HepG2 (cell line): ENCODE measurements at regions of chr14 and their contacts with region 1.

Region 1: GRCh38 chr14:92951912-92952471 is 29.0 kb downstream of the CHGA start:
- DNase-seq: peak; percentile 37
- ATAC-seq: peak; percentile 92
- H3K4me3 ChIP-seq: no peak overlapping the region
- H3K27ac ChIP-seq: no peak overlapping the region
- H3K4me1 ChIP-seq: no peaks in the 10 kb centered on the region
- H3K27me3 ChIP-seq: no peaks in the 10 kb centered on the region; a peak in 1 of 5 replicates
- CTCF ChIP-seq: peak; percentile 97
- EP300 ChIP-seq: no peak
- POLR2A ChIP-seq: no peak
- RAD21 ChIP-seq: peak; percentile 97

Region 2: GRCh38 chr14:93132470-93133065 is 180.6 kb after region 1 on chr14:
- CTCF ChIA-PET with region 1: interaction called, 32 read pairs
- POLR2A ChIA-PET with region 1: no interaction called
- in situ Hi-C with region 1: loop called (anchors 5 kb)
- intact Hi-C with region 1: loop called (anchors 1 kb)
- DNase-seq: peak; percentile 70
- ATAC-seq: peak; percentile 93
- H3K4me3 ChIP-seq: no peak overlapping the region
- H3K27ac ChIP-seq: no peak overlapping the region
- H3K4me1 ChIP-seq: peaks cover 30% of the 10 kb centered on the region
- H3K27me3 ChIP-seq: peaks cover 1 to 7% of the 10 kb centered on the region in 2 experiments; a peak in 3 of 5 replicates
- CTCF ChIP-seq: peak; percentile 81
- EP300 ChIP-seq: no peak
- POLR2A ChIP-seq: no peak
- RAD21 ChIP-seq: peak; percentile 21; the same call in 1 of the 2 replicates

Region 3: GRCh38 chr14:93137864-93138263 is 185.9 kb after region 1 on chr14:
- CTCF ChIA-PET with region 1: interaction called, 32 read pairs
- POLR2A ChIA-PET with region 1: no interaction called
- in situ Hi-C with region 1: loop called (anchors 5 kb)
- intact Hi-C with region 1: loop called (anchors 1 kb)
- DNase-seq: peak; percentile 56
- ATAC-seq: peak; percentile 75
- H3K4me3 ChIP-seq: no peak overlapping the region; a peak in 1 of 6 replicates
- H3K27ac ChIP-seq: no peak overlapping the region
- H3K4me1 ChIP-seq: peaks cover 48% of the 10 kb centered on the region
- H3K27me3 ChIP-seq: no peaks in the 10 kb centered on the region; a peak in 1 of 5 replicates
- CTCF ChIP-seq: peak; percentile 35; the same call in 1 of the 2 replicates
- EP300 ChIP-seq: no peak
- POLR2A ChIP-seq: no peak
- RAD21 ChIP-seq: no peak